Activated naive CD4-positive, alpha-beta T cell treated with anti-CD3 and anti-CD28 coated beads for 36 hours (primary cell): ENCODE measurements at regions of chr7 and their contacts with region 1.

Region 1: DNA sequence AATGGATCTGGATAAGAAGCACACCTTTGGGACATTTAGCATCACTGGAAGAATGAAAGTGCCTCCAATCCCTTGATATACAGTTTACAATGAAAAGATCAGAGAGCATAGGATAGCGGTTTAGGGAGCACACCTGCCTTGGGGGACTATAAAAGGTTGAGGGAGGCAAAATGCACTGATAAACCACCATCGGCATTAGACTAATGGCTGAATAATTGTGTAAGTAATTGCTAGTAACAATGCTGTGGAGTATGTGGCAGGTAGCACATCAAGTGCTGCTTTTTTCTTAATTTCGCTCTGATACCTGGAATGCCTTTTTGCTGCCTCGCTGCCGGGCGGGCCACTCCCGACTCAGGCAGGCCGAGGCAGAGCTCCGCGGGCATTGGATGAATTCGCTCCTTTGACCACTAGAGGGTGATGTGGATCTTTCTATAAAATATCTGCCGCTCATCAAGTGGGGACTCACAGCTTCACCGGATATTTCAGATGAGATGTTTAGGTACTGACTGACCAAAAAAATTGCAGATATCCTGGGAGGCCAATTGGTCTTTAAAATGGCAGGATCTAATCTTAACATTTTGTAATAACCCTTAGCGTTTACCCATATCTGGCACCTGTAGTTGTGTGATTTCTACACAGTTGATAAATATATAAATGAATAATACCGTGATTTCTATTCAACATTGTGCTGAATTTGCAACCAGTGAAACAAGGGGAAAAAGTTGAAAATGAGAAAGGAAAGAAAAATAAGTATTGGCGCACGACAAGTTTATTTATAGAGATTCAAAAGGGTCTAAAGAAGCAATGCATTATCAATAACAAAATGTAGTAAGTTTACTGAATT is 116.8 kb upstream of the PRSS1 start:
- DNase-seq: peak; percentile 66
- H3K4me3 Mint-ChIP-seq: no peak overlapping the region
- H3K27ac Mint-ChIP-seq: no peak overlapping the region
- H3K4me1 Mint-ChIP-seq: peaks cover 11% of the 10 kb centered on the region
- H3K27me3 Mint-ChIP-seq: no peaks in the 10 kb centered on the region

Region 2: DNA sequence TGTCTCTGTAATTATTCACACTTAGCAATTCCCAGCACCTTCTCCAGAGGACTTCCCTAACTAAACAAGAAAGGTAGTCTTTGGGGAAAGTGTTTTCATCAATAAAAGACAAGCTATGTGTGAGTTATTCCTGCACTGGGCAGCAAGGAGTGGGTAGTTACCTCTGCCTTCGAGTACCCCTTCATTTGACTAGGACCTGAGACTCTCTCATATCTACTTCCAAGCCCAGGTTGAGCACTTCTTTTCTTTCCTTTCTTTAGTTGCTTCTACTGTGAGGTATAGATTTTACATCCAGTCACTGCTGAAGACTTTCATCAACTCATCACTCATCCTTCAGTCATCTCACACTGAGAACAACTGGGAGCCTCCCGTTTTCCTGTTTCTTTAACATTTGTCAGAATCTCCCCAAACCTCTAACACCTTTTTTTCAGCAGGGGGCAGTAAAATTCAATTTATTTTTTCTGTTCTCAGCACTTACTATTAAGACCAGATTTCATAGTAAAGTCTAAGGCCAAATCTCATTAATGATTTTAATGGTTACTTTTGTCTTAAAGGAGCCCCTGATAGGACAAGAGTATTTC is 36.7 kb after region 1 on chr7:
- CTCF ChIA-PET with region 1: interaction called, 5 read pairs
- intact Hi-C with region 1: loop called (anchors 1 kb)
- DNase-seq: no peak
- H3K4me3 Mint-ChIP-seq: no peak overlapping the region
- H3K27ac Mint-ChIP-seq: peak overlapping the region; percentile 13
- H3K4me1 Mint-ChIP-seq: peaks cover 28% of the 10 kb centered on the region
- H3K27me3 Mint-ChIP-seq: no peaks in the 10 kb centered on the region

Region 3: GRCh38 chr7:142711746-142712619 is 79.5 kb after region 1 on chr7:
- CTCF ChIA-PET with region 1: interaction called, 3 read pairs
- intact Hi-C with region 1: loop called (anchors 1 kb)
- DNase-seq: peak; percentile 51
- H3K4me3 Mint-ChIP-seq: peak overlapping the region; percentile 78
- H3K27ac Mint-ChIP-seq: peak overlapping the region; percentile 89
- H3K4me1 Mint-ChIP-seq: peaks cover 43% of the 10 kb centered on the region
- H3K27me3 Mint-ChIP-seq: no peaks in the 10 kb centered on the region

Region 4: DNA sequence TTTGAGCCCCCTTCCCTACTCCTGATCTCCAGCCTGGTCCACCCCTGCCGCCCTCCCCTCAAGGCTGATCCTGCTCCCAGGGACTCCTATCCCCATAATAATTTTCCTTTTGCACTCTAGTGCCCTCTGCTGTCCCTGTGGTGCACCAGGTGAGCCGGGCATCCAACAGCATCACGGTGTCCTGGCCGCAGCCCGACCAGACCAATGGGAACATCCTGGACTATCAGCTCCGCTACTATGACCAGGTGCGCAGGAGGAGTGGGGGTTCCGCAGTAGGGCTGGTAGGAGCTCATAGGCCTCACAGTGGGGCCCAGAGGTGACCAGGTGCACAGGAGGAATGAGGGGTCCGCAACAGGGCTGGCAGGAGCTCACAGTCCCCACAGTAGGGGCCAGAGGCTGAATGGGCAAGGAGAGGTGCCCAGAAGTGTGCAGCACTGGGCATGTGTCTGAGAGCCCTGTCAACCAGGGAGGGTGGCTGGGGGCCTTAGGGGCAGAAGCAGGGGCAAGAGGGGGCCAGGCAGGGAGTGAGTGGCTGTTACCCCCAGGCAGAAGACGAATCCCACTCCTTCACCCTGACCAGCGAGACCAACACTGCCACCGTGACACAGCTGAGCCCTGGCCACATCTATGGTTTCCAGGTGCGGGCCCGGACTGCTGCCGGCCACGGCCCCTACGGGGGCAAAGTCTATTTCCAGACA is 234.0 kb after region 1 on chr7:
- CTCF ChIA-PET with region 1: interaction called, 9 read pairs
- intact Hi-C with region 1: loop called (anchors 2 kb)
- DNase-seq: peak; percentile 27
- H3K4me3 Mint-ChIP-seq: no peak overlapping the region
- H3K27ac Mint-ChIP-seq: peak overlapping the region; percentile 46
- H3K4me1 Mint-ChIP-seq: peaks cover 2% of the 10 kb centered on the region
- H3K27me3 Mint-ChIP-seq: no peaks in the 10 kb centered on the region